Right ventricle myocardium inferior (tissue), 1 donor: ENCODE measurements at regions of chr1 and their contacts with region 1.

Region 1: GRCh38 chr1:64933296-64934070 is 32.9 kb downstream of the JAK1 start:
- DNase-seq: peak; percentile 61
- ATAC-seq: peak; percentile 84

Region 2: GRCh38 chr1:64950284-64950809 is 16.9 kb after region 1 on chr1:
- intact Hi-C with region 1: loop called (anchors 2 kb)
- DNase-seq: no peak
- ATAC-seq: no peak

Region 3: DNA sequence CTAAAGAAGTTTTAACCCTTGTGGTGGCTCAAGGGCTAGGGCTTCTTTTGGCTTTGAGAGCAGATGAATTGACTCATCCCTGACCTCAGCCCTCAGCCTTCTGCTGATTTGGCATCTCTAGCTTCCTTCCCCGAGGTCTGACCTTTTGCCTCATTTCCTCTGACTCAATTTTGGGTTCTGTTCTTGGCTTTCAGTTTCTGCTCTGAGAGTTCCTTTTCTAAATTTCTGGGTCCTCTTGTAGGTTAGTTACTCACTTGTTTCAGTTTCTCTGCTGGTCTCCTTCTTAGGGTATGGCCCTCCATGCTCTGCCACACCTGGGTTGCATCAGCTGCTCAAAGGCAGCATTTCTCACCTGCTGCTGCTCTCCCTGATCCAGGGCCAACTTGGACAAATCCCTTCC is 878.6 kb after region 1 on chr1:
- intact Hi-C with region 1: no loop called
- DNase-seq: no peak
- ATAC-seq: peak; percentile 62